HEK293T (cell line): ENCODE measurements at regions of chr6 and their contacts with region 1.

Region 1: GRCh38 chr6:44265007-44265721 is at the start of gene NFKBIE:
- DNase-seq: peak; percentile 93

Region 2: DNA sequence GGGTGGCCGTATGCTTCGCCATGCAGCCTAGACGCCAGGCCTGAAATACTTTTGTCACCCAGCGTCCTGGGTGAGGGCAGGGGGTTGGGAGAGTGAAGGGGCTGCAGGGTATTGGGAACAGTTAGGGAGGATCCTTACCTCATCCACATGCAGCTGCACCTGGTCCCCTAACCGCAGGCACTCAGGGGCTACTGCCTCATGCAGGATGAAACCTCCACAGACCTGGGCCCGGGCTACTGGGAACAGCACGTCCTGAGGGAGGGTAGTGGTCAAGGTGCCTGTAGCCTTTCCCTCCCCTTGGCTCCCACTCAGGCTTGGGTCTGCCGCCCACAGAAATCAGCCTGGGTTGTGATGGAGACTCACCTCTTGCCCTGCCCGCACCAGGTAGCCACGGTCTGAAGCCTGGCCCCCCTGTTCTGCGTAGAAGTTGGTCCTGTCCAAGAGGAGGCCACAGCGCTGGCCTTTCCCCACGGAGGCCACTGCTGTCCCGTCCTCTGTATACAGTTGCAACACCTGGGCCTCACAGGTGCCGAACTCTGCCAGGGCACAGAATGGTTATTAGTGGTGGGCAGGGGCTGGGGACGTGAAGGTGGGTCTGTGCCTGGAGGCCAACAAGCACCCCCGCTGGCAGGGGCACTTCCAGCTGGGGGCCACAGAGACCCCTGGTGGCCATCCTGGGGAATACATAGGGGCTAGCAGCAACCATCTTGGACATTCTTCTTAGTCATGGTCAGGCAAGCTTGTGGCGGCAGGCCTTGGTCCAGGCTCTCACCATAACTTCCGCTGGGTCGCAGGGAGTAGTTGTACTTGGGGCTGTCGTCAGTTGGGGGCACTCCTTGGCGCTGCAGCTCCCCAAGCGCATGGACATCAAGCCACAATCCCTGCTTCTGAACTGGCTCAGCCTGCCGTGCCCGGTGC is 39.4 kb after region 1 on chr6:
- CTCF ChIA-PET with region 1: interaction called, 25 read pairs
- POLR2A ChIA-PET with region 1: interaction called, 3 read pairs
- DNase-seq: peak; percentile 70